ENCODE measurements at regions of chr12 and their contacts with region 1.

Region 1: GRCh38 chr12:110005319-110005973 is 6.2 kb downstream of the ANKRD13A start:
- DNase-seq: no peak
- H3K4me3 Mint-ChIP-seq: peak overlapping the region; percentile 6
- H3K27ac Mint-ChIP-seq: peak overlapping the region; percentile 29
- H3K4me1 Mint-ChIP-seq: peaks cover 54% of the 10 kb centered on the region
- H3K27me3 Mint-ChIP-seq: no peaks in the 10 kb centered on the region

Region 2: DNA sequence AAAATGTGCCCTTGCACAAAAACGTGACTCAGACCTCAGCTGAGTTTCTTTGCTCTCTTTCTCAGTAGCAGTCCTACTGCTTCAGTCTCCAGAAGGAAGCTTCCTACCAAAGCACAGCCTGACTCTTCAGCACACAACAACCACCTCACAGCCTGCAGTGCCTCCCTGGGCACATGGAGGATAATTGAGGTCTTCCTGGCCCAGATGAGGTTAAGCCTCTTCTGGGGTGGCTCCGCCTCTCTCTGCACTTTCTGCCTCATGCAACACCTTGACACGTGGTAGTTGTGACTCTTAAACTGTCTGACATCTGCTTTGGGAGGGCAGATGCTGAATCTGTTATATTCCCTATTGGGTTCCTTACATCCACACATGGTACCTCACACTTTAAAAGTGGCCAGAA is 43.0 kb before region 1 on chr12:
- intact Hi-C with region 1: no loop called
- DNase-seq: no peak
- H3K4me3 Mint-ChIP-seq: no peak overlapping the region
- H3K27ac Mint-ChIP-seq: no peak overlapping the region
- H3K4me1 Mint-ChIP-seq: peaks cover 15% of the 10 kb centered on the region
- H3K27me3 Mint-ChIP-seq: no peaks in the 10 kb centered on the region

Region 3: GRCh38 chr12:109972821-109973220 is 32.6 kb before region 1 on chr12:
- intact Hi-C with region 1: loop called (anchors 5 kb)
- DNase-seq: no peak
- H3K4me3 Mint-ChIP-seq: no peak overlapping the region
- H3K27ac Mint-ChIP-seq: no peak overlapping the region
- H3K4me1 Mint-ChIP-seq: peaks cover 25% of the 10 kb centered on the region
- H3K27me3 Mint-ChIP-seq: no peaks in the 10 kb centered on the region